CD14-positive monocyte (primary cell): ENCODE measurements at regions of chr16 and their contacts with region 1.

Region 1: DNA sequence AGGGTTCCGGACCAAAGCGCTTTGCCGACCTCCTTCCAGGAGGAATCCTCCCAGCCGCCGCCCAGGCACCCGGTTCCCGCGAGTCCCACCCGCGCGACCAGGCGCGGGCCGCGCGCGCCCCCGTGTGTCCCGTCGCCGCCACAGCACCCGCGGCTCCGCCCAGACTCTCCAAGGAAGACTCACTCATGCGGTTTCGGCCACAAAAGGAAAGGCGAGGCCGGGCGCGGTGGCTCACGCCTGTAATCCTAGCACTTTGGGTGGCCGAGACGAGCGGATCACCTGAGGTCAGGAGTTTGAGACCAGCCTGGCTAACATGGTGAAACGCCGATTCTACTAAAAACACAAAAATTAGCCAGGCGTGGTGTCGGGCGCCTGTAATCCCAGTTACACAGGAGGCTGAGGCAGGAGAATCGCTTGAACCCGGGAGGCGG is 3.5 kb upstream of the PKMYT1 start:
- DNase-seq: peak; percentile 59 to 80 (median 71)
- H3K4me3 ChIP-seq: peak overlapping the region in 1 of 3 experiments; percentile 15
- H3K4me3 Mint-ChIP-seq: peak overlapping the region; percentile 57 to 76
- H3K27ac ChIP-seq: no peak overlapping the region
- H3K27ac Mint-ChIP-seq: peak overlapping the region in 4 of 7 donors; percentile 36 to 83 (median 54)
- H3K4me1 ChIP-seq: peaks cover 22 to 29% of the 10 kb centered on the region in 2 donors
- H3K4me1 Mint-ChIP-seq: peaks cover 23% of the 10 kb centered on the region
- H3K27me3 ChIP-seq: no peaks in the 10 kb centered on the region
- H3K27me3 Mint-ChIP-seq: peaks cover 3 to 18% (median 4%) of the 10 kb centered on the region in 3 donors
- CTCF ChIP-seq: peak; percentile 95

Region 2: GRCh38 chr16:2968738-2969544 is 14.8 kb before region 1 on chr16 and contains the start of gene PAQR4:
- intact Hi-C with region 1: loop called in 1 of 2 experiments (anchors 2 kb)
- DNase-seq: peak; percentile 87 to 92 (median 87)
- H3K4me3 ChIP-seq: peak within 1 kb of the TSS; percentile 63 to 95 (median 63)
- H3K4me3 Mint-ChIP-seq: peak within 1 kb of the TSS; percentile 77 to 85
- H3K27ac ChIP-seq: peak within 1 kb of the TSS; percentile 20 to 53
- H3K27ac Mint-ChIP-seq: peak within 1 kb of the TSS in 5 of 7 donors; percentile 24 to 83 (median 70)
- H3K4me1 ChIP-seq: peaks cover 50 to 66% of the 10 kb centered on the region in 2 donors
- H3K4me1 Mint-ChIP-seq: peaks cover 41% of the 10 kb centered on the region
- H3K27me3 ChIP-seq: peaks cover 17 to 44% of the 10 kb centered on the region in 2 donors
- H3K27me3 Mint-ChIP-seq: peaks cover 30 to 48% (median 34%) of the 10 kb centered on the region in 3 donors
- CTCF ChIP-seq: no peak
- polyA plus RNA-seq, gene PAQR4: 6.3 to 14.2 (median 8.9) TPM

Region 3: GRCh38 chr16:3198334-3199072 is 214.8 kb after region 1 on chr16:
- intact Hi-C with region 1: no loop called
- DNase-seq: no peak
- H3K4me3 ChIP-seq: no peak overlapping the region
- H3K4me3 Mint-ChIP-seq: peak overlapping the region in 1 of 2 donors; percentile 55
- H3K27ac ChIP-seq: no peak overlapping the region
- H3K27ac Mint-ChIP-seq: no peak overlapping the region
- H3K4me1 ChIP-seq: no peaks in the 10 kb centered on the region
- H3K4me1 Mint-ChIP-seq: peaks cover 5% of the 10 kb centered on the region
- H3K27me3 ChIP-seq: peaks cover 8 to 50% of the 10 kb centered on the region in 2 donors
- H3K27me3 Mint-ChIP-seq: peaks cover 34 to 72% (median 59%) of the 10 kb centered on the region in 3 donors
- CTCF ChIP-seq: no peak